Cardiac septum (tissue), 1 donor: ENCODE measurements at regions of chr10 and their contacts with region 1.

Region 1: DNA sequence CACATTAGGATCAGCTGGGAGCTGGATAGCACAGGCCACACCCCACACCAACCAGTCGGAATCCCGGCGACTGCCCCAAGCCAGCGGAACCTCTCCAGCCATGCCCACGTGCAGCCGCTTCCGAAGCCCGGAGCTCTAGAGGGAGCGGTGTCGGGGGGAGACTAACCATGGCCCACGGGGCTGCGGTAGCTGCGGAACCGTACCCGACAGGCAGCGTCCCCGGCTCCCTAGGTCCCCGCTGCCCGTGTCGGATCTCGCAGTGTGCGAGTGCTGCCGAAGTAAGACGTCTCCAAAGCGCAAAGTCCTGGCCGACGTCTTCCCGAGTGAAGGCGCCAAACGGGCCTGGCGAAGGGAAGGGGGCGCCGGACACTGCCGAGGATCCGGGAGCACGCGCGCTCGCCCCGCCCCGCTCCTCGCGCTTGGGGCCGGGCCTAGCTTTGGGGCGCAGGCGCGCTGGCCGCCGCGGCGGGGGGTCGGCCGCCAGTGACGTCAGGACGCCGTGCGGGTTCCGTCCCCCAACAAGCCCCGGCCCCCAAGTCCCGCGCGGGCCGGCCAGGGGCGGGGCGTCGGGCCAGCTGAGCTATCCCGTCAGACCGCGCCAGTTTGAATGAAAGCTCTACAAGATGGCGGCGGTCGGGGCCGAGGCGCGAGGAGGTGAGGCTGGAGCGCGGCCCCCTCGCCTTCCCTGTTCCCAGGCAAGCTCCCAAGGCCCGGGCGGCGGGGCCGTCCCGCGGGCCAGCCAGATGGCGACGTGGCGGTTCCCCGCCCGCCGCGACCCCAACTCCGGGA is at the start of gene SUV39H2:
- DNase-seq: peak; percentile 97
- total RNA-seq, gene SUV39H2: 7.9 TPM

Region 2: GRCh38 chr10:14604181-14605142 is 274.0 kb before region 1 on chr10:
- intact Hi-C with region 1: loop called (anchors 5 kb)
- DNase-seq: peak; percentile 93

Region 3: GRCh38 chr10:14926722-14927416 is 48.4 kb after region 1 on chr10:
- intact Hi-C with region 1: no loop called
- DNase-seq: no peak

Region 4: GRCh38 chr10:14959276-14960057 is 81.0 kb after region 1 on chr10 and contains the start of gene MEIG1:
- intact Hi-C with region 1: loop called (anchors 5 kb)
- DNase-seq: peak; percentile 95
- total RNA-seq, gene MEIG1: 0.54 TPM